ENCODE measurements at regions of chr4 and their contacts with region 1.

Region 1: GRCh38 chr4:2977211-2978088 is 14.1 kb downstream of the GRK4 start:
- DNase-seq: no peak
- ATAC-seq: no peak
- H3K4me3 ChIP-seq: no peak overlapping the region
- H3K4me3 Mint-ChIP-seq: no peak overlapping the region
- H3K27ac ChIP-seq: no peak overlapping the region
- H3K27ac Mint-ChIP-seq: no peak overlapping the region
- H3K4me1 ChIP-seq: no peaks in the 10 kb centered on the region
- H3K4me1 Mint-ChIP-seq: no peaks in the 10 kb centered on the region
- H3K27me3 ChIP-seq: no peaks in the 10 kb centered on the region
- H3K27me3 Mint-ChIP-seq: peaks cover 4% of the 10 kb centered on the region
- CTCF ChIP-seq: no peak

Region 2: DNA sequence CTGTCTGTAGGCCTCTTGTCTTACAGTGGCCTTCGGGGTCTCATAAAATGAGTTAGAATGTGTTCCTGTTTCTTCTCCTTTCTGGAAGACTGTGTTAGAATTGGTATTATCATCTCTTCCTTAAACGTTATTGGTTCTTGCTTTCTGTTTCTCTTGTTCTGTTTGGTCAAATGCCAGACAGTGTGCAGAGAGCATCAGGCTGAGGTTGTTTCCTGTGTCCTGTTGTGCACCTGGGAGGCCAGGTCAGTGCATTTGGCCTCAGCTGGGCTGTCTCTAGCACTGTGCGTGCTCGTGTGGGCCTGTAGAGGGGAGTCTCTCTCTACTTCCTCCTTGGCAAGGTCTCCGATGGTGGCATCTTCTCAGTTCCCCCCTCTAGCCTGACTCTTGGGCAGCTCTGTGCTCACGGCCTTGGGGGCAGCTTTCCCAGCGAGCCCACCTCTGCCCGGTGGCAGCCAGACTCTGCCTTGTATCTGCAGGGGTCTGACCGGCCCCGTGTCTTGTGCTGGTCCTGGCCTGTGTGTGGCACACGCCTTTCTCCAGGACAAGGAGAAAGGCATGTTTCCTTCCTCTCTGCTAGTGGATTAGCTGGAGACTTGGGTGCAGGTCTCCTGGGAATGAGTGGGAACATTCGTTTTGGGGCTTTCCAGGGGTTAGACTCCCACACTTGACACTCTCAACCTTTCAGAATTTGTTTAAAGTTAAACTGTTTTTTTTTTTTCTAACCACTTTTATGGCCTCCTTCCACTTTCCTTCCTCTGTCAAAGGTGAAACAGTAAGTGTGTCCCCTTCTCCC is 378.7 kb before region 1 on chr4:
- CTCF ChIA-PET with region 1: no interaction called
- POLR2A ChIA-PET with region 1: no interaction called
- intact Hi-C with region 1: no loop called
- DNase-seq: peak in 4 of 9 experiments; percentile 3 to 44 (median 24)
- ATAC-seq: peak; percentile 87
- H3K4me3 ChIP-seq: no peak overlapping the region
- H3K4me3 Mint-ChIP-seq: no peak overlapping the region
- H3K27ac ChIP-seq: peak overlapping the region in 1 of 2 experiments; percentile 28
- H3K27ac Mint-ChIP-seq: peak overlapping the region; percentile 90
- H3K4me1 ChIP-seq: peaks cover 15% of the 10 kb centered on the region
- H3K4me1 Mint-ChIP-seq: peaks cover 55% of the 10 kb centered on the region
- H3K27me3 ChIP-seq: no peaks in the 10 kb centered on the region
- H3K27me3 Mint-ChIP-seq: no peaks in the 10 kb centered on the region
- CTCF ChIP-seq: no peak

Region 3: DNA sequence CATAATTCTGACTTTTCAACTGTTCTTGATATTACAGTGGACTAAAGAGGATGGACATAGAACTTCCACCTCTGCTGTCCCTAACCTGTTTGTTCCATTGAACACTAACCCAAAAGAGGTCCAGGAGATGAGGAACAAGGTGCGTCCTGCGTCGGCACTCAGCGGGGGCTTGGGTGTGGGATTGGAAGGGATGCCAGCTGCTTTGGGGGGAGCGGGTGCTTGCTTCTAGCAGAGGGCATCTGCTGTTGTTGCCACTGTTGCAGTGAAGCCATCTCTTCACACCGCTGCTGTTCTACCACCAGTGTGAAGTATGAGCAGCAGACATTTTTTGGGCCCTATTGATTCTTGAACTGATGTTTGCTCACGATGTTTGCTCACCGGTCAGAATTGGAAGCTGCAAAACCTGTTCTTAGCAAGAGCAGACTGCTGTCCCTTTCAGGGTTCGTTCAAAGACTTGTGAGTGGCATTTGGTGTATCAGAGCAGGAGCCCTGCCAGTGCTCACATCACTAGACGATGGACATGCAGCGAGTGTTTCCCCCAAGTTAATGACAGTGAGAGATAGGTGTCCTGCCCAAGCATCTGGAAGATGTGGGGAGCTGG is 69.6 kb before region 1 on chr4:
- CTCF ChIA-PET with region 1: no interaction called
- POLR2A ChIA-PET with region 1: no interaction called
- intact Hi-C with region 1: no loop called
- DNase-seq: no peak
- ATAC-seq: no peak
- H3K4me3 ChIP-seq: no peak overlapping the region
- H3K4me3 Mint-ChIP-seq: no peak overlapping the region
- H3K27ac ChIP-seq: peak overlapping the region in 1 of 2 experiments; percentile 66
- H3K27ac Mint-ChIP-seq: peak overlapping the region; percentile 77
- H3K4me1 ChIP-seq: peaks cover 25% of the 10 kb centered on the region
- H3K4me1 Mint-ChIP-seq: peaks cover 30% of the 10 kb centered on the region
- H3K27me3 ChIP-seq: no peaks in the 10 kb centered on the region
- H3K27me3 Mint-ChIP-seq: no peaks in the 10 kb centered on the region
- CTCF ChIP-seq: no peak

Region 4: GRCh38 chr4:2991243-2991642 is 13.8 kb after region 1 on chr4:
- CTCF ChIA-PET with region 1: interaction called, 33 read pairs
- POLR2A ChIA-PET with region 1: no interaction called
- intact Hi-C with region 1: no loop called
- DNase-seq: no peak
- ATAC-seq: no peak
- H3K4me3 ChIP-seq: no peak overlapping the region
- H3K4me3 Mint-ChIP-seq: no peak overlapping the region
- H3K27ac ChIP-seq: no peak overlapping the region
- H3K27ac Mint-ChIP-seq: no peak overlapping the region
- H3K4me1 ChIP-seq: no peaks in the 10 kb centered on the region
- H3K4me1 Mint-ChIP-seq: no peaks in the 10 kb centered on the region
- H3K27me3 ChIP-seq: peaks cover 0 to 3% of the 10 kb centered on the region in 2 experiments
- H3K27me3 Mint-ChIP-seq: peaks cover 6% of the 10 kb centered on the region
- CTCF ChIP-seq: no peak

Region 5: GRCh38 chr4:3037957-3038461 is 60.6 kb after region 1 on chr4:
- CTCF ChIA-PET with region 1: interaction called, 13 read pairs
- POLR2A ChIA-PET with region 1: no interaction called
- intact Hi-C with region 1: loop called in 1 of 2 experiments (anchors 5 kb)
- DNase-seq: peak in 1 of 9 experiments; percentile 31
- ATAC-seq: no peak
- H3K4me3 ChIP-seq: peak overlapping the region in 1 of 2 experiments; percentile 42
- H3K4me3 Mint-ChIP-seq: peak overlapping the region; percentile 68
- H3K27ac ChIP-seq: no peak overlapping the region
- H3K27ac Mint-ChIP-seq: peak overlapping the region; percentile 4
- H3K4me1 ChIP-seq: peaks cover 30% of the 10 kb centered on the region
- H3K4me1 Mint-ChIP-seq: peaks cover 31% of the 10 kb centered on the region
- H3K27me3 ChIP-seq: peaks cover 0 to 2% of the 10 kb centered on the region in 2 experiments
- H3K27me3 Mint-ChIP-seq: peaks cover 7% of the 10 kb centered on the region
- CTCF ChIP-seq: no peak